AG04449 (cell line): ENCODE measurements at regions of chr2 and their contacts with region 1.

Region 1: DNA sequence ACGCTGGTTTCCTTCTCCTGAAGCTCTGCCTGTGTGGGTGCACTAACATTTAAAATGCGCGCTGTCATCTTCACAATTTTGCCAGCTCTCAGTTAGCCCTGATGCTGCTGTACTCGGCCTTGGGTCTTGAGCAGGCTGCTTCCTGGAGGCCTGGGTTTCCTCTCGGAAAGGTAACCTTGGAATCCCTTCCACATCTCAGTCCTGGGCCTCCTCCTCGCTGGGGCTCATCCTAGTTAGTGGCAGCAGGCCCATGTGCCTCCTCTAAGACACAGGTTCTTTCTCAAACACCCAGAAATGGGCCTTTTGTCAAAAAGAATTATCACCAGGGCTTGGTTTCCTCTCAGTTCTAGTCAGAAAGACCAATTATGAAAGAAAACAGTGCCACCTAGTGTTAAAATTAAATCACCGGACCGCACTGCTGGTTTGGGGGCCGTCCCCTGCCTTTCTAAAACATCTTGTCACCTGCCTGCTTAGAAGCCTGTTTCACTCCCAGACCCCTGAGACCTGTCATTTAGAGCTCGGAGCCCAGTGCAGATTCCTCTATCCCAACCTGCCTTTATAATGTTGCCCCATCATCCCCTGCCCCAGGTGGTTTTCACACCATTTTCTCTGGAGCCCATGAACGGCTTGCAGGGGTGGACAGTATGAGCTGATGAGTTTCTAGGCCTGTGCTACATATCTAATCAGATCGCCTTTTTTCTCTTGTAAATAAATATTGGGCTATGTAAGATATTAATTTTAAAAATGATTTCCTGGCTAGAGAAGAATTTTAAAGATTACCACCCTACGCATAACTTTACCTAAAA is 42.4 kb downstream of the HK2 start:
- DNase-seq: no peak
- H3K4me3 ChIP-seq: no peak overlapping the region
- CTCF ChIP-seq: peak; percentile 49

Region 2: GRCh38 chr2:74391580-74392448 is 484.5 kb before region 1 on chr2:
- CTCF ChIA-PET with region 1: no interaction called
- POLR2A ChIA-PET with region 1: no interaction called
- DNase-seq: peak; percentile 29
- H3K4me3 ChIP-seq: peak overlapping the region; percentile 72
- CTCF ChIP-seq: peak; percentile 90

Region 3: DNA sequence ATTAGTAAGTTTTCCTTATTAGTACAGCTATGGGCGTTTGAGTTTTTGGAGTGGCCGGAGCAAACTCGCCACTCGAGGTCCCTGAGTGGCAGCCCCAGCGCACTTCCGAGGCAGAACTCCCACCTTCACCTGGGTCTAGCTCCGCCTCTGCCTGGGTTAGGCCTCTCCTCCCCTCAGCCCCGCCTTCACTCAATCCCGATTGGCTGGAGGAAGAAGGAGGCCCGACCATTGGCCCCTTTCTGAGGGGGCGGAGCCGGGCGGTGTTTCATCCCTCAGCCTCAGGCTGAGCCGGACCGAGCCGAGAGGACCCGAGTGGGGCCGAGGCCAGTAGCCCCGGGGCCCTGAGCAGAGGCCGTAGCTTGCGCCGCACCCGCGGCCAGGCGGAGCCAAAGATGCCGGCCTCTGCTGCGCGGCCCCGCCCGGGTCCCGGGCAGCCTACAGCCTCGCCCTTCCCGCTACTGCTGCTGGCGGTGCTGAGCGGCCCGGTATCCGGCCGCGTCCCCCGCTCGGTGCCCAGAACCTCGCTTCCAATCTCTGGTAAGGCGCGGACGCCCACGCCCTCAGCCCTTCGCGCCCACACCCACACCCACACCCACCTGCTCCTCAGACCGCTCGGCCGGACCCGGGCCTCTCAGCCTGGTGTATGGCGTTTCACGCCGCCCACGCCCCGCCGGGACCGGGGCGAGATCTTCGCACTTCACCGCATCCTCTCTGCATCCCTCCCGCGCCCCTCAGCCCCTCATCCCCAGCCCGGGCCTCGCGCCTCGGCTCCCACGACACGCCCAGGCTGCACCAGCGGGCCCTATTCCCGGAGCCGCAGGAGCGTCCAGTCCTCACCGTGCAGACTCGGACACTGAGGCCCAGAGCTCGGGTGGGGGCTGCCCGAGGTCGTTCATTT is 222.1 kb before region 1 on chr2 and contains the start of gene SEMA4F:
- CTCF ChIA-PET with region 1: no interaction called
- POLR2A ChIA-PET with region 1: no interaction called
- DNase-seq: peak; percentile 42
- H3K4me3 ChIP-seq: peak within 1 kb of the TSS; percentile 70
- CTCF ChIP-seq: no peak

Region 4: GRCh38 chr2:74690571-74690970 is 185.7 kb before region 1 on chr2:
- CTCF ChIA-PET with region 1: interaction called, 142 read pairs
- POLR2A ChIA-PET with region 1: no interaction called
- DNase-seq: no peak
- H3K4me3 ChIP-seq: no peak overlapping the region
- CTCF ChIP-seq: peak; percentile 64

Region 5: DNA sequence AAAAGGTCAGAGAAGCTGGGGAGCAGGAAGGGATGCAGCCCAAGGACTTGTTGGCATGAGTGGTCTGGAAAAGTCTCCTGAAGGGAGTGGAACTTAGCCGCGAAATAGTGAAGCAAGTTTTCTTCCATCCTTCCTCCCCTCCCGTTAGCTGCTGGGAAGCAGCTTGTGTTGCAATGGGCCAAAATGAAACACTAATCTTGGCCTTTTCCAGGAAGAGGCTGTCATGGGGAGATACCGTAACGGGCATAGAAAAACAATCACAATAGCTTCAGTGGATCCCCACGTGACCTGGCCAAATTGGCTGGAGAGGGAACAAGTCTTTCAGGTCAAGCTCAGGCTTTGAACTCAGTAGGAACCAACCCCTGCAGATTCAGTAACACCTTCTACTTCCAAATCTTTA is 172.9 kb before region 1 on chr2:
- CTCF ChIA-PET with region 1: interaction called, 17 read pairs
- POLR2A ChIA-PET with region 1: no interaction called
- DNase-seq: no peak
- H3K4me3 ChIP-seq: no peak overlapping the region
- CTCF ChIP-seq: no peak

Region 6: DNA sequence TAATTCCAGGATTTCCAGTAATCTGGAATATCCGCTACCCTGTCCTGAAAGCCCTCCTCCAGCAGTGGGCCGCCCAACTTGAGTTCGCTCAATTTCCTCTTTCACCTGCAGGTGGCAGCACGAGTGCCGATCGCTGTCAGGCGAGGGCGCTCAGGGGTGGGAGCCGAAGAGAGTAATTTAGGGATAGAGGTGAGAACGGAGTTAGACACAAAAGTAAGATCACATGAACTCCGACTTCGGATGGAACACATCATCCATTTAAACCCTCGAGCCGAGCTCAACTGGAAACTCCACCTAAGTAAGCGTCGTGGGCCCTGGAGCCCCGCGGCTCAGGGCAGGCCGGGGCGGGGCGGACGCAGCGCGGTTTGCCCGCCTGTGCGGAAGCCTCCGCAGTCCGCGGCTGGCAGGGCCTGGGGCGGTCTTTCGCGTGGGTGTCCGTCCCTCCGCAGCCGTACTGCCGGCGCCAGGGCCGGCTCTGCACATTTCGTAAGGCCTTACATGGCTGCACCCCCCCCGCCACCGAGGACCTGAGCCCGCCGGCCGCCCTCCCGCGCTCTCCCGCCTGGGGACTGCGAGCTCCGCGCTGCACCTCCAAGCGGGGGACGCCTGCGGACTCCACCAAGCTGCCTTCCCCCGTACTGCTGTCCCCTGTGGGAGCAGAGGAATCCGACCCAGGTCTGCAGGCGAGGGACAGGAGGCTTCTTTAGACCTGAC is 161.0 kb before region 1 on chr2:
- CTCF ChIA-PET with region 1: interaction called, 225 read pairs
- POLR2A ChIA-PET with region 1: no interaction called
- DNase-seq: no peak
- H3K4me3 ChIP-seq: peak overlapping the region; percentile 61
- CTCF ChIP-seq: peak; percentile 95

Region 7: DNA sequence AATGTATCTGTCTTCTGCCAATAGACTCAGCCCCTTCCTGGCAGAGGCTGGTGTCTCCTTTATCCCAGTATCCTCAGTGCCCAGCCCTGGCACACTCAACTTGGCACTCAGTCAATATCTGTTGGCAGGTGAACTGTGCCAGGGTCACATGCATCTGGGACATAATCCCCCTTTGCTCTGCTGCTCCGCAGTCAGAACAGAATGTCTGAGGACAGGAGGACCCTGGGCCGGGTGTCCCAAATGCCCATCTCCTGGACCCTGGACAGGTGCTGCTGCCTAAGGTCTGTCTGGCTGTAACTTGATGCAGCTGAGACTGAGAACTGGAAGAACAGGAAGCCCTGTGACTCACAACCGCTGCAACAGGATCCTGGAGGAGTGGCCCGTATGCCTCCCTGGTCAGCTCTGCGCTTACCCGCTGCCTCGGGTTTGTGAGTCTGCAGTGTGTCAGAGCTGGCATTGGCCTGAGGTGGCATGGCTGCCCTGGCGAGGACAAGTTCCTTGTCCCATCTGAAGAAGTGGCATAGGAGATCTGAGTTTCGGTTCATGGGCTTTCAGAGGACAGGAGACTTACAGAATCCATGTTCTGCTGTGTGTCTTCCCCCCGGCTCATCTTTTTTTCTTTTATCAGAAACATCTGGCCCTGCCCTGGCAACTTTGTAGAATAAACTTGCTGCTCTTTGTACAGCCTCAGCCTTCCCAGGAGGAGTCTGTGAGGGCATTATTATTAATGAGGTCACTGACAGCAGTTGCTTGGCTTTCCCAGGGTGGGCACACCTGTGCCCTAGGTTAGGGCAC is 30.9 kb before region 1 on chr2:
- CTCF ChIA-PET with region 1: interaction called, 12 read pairs
- POLR2A ChIA-PET with region 1: no interaction called
- DNase-seq: peak; percentile 52
- H3K4me3 ChIP-seq: peak overlapping the region; percentile 25
- CTCF ChIP-seq: no peak

Region 8: DNA sequence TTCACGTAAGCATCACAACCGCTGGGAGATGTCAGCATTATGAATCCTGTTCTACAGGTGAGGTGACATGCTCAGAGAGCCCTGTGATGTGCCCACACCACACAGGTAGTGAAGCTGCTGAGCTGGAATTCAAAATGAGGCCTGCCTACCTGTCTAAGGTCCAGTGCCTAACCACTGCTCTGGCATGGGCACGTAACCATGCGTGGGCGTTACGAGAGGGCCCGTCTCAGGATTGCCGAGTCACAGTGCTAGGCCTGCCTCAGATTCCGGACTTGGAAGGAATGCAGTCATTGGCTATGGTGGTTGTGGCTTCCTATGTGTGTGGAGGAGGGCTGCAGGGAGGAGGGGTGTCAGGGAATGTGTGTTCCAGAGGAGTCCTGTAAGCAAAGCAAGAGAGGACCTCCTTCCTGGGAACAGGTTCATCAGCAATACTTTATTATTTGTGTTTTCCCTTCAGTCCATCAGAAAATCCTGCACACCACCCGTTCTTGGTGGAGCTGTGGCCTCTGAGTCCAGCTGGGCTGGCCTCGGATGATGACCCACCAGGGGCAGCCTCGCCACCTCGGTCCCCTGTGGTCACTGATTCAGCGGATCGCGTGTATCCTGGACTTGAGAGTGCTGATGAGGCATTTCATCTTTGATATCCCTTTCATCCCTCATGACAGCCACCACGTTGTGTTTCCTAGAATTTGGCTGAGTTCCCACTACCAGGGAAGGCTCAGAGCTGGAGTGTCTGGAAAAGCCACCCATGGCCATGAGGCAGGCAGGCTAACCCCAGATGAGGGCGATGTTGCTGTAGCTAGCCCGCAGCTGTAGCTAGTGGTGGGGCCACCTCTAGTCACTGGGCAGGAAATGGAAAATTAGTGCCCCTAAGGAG is 11.2 kb before region 1 on chr2:
- CTCF ChIA-PET with region 1: interaction called, 35 read pairs
- POLR2A ChIA-PET with region 1: no interaction called
- DNase-seq: no peak
- H3K4me3 ChIP-seq: no peak overlapping the region
- CTCF ChIP-seq: no peak

Region 9: GRCh38 chr2:74893332-74893731 is 17.0 kb after region 1 on chr2:
- CTCF ChIA-PET with region 1: interaction called, 43 read pairs
- POLR2A ChIA-PET with region 1: no interaction called
- DNase-seq: no peak
- H3K4me3 ChIP-seq: no peak overlapping the region
- CTCF ChIP-seq: no peak